ENCODE measurements at regions of chr1 and their contacts with region 1.

Region 1: GRCh38 chr1:2391041-2391930 is at the starts of genes MORN1 and RER1:
- DNase-seq: peak; percentile 100
- CTCF ChIP-seq: no peak

Region 2: DNA sequence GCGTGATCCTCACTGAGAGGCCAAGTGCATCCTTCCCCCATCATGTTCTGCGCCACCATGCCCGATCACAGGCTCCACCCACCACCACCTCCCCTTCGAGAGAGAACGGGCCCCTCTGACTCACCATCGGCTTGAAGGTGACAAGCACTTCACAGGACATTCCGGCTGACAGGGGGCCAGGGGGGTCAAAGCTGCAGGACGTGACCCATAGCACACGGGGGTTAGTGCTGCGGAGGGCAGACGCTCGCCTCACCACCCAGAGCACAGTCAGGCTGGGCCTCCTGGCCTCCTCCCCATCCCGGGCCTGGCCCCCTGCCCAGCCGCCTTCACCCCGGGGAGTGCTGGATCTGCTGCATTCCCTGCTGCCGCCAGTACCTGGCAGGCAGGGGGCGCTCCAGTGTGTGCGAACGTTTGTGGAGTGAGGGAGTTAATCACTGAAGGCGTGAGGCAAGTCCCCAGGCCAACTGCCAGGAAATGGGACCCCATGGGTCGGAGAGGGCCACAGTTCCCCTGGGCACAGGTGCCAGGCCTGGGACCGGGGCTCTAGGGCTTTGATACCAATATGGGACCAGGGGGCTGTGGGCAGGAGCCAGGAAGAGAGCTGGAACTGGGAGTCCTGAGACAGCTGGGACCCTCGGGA is 431.3 kb before region 1 on chr1:
- in situ Hi-C with region 1: loop called (anchors 25 kb)
- DNase-seq: peak; percentile 88
- CTCF ChIP-seq: peak; percentile 90

Region 3: GRCh38 chr1:2946291-2946690 is 555.0 kb after region 1 on chr1:
- in situ Hi-C with region 1: no loop called
- DNase-seq: no peak
- CTCF ChIP-seq: no peak